Activated CD4-positive, alpha-beta T cell treated with anti-CD3 and anti-CD28 coated beads for 36 hours (primary cell): ENCODE measurements at regions of chr7 and their contacts with region 1.

Region 1: DNA sequence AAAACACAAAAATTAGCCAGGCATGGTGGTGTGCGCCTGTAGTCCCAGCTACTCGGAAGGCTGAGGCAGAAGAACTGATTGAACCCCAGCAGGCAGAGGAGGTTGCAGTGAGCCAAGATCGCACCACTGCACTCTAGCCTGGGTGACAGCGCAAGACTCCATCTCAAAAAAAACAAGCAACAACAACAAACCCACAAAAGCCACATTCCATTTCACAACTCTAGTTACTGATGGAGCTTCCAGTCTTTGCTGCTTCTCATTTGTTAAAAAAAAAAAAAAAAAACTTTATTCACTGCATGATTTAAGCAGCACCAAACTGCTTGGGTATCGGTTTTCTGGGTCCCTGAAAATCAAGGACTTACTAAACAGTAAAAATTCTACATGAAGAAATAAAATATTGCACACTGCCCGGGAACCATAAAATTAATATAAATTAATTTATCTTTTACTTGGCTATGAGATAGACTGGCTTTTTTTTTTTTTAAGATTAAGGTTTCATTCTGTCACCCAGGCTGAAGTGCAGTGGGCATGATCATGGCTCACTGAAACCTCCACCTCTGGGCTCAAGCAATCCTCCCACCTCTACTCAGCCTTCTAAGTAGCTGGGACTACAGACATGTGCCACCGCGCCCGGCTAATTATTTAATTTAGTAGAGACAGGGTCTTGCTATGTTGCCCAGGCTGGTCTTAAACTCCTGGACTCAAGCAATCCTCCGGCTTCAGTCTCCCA is 42.0 kb downstream of the SRPK2 start:
- DNase-seq: peak; percentile 29
- ATAC-seq: peak; percentile 25
- H3K4me3 Mint-ChIP-seq: peak overlapping the region; percentile 10
- H3K27ac Mint-ChIP-seq: no peak overlapping the region
- H3K4me1 Mint-ChIP-seq: peaks cover 67% of the 10 kb centered on the region
- H3K27me3 Mint-ChIP-seq: no peaks in the 10 kb centered on the region

Region 2: GRCh38 chr7:105261688-105262087 is 85.1 kb before region 1 on chr7:
- CTCF ChIA-PET with region 1: no interaction called
- POLR2A ChIA-PET with region 1: no interaction called
- intact Hi-C with region 1: no loop called
- DNase-seq: no peak
- ATAC-seq: no peak
- H3K4me3 Mint-ChIP-seq: no peak overlapping the region
- H3K27ac Mint-ChIP-seq: no peak overlapping the region
- H3K4me1 Mint-ChIP-seq: peaks cover 50% of the 10 kb centered on the region
- H3K27me3 Mint-ChIP-seq: no peaks in the 10 kb centered on the region

Region 3: DNA sequence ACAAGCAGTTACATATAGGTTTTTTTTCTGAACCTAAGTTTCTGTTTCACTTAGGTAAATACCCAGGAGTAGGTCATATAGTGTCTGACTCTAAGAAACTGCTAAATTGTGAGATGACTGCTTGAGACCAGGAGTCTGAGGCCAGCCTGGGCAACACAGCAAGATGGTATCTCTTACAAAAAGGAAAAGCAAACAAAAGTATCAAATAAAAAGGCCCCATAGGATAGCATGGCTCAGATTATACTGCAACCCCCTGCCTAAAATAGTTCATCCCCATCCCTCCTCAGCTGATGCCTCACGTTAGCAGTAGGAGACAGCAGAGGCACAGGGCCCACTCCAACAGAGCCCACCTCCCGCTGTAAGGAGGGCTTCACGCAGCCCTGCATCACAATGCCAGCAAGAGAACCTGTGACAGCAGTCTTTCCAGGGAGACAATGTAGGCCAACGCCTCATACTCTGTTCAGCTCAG is 48.3 kb before region 1 on chr7:
- CTCF ChIA-PET with region 1: no interaction called
- POLR2A ChIA-PET with region 1: no interaction called
- intact Hi-C with region 1: loop called in 1 of 2 experiments (anchors 2 kb)
- DNase-seq: peak; percentile 65
- ATAC-seq: peak; percentile 92
- H3K4me3 Mint-ChIP-seq: peak overlapping the region; percentile 53
- H3K27ac Mint-ChIP-seq: peak overlapping the region; percentile 90
- H3K4me1 Mint-ChIP-seq: peaks cover 58% of the 10 kb centered on the region
- H3K27me3 Mint-ChIP-seq: no peaks in the 10 kb centered on the region

Region 4: DNA sequence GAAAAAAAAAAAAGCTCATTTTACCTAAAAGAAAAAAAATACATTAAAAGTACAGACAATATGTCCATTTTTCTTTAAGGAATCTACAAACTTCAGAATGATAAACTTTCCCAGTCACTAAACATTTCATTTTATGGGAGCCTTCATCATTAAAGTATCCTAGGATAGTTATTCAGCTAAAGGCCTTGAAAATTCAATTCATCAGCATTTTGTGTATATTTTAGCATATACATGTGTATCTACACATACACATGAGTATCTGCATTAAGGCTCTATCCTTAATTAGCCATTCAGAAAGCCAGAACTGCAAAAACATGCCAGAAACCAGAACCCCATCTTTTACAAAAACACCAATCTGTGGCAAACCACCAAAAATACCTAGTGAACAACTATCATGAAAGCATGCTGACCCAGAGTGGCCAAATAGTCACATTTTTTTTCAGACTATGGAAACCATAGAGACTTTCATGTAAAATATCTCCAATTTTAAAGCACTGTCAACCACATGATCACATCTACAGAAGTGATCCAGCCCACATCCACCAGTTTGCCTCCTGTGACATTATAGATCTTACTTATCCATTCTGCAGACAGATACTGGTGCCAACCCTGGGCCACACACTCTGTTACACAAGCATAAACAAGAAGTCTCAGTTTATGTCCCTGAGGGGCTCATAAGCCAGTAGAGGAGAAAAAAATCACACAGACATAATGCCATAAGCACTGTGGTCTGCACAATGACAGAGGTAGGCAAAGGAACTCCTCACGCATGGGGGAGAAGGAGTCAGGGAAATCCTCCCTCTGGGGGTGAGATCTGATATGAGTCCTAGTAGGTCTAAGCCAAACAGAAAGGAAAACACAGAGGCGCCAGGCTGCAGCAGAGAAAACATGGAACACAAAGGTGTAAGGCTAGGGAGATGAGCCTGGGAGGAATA is 37.3 kb before region 1 on chr7:
- CTCF ChIA-PET with region 1: no interaction called
- POLR2A ChIA-PET with region 1: no interaction called
- intact Hi-C with region 1: loop called in 1 of 2 experiments (anchors 5 kb)
- DNase-seq: peak; percentile 16
- ATAC-seq: peak; percentile 39
- H3K4me3 Mint-ChIP-seq: no peak overlapping the region
- H3K27ac Mint-ChIP-seq: peak overlapping the region; percentile 30
- H3K4me1 Mint-ChIP-seq: peaks cover 56% of the 10 kb centered on the region
- H3K27me3 Mint-ChIP-seq: no peaks in the 10 kb centered on the region

Region 5: GRCh38 chr7:105602325-105603305 is 255.9 kb after region 1 on chr7:
- CTCF ChIA-PET with region 1: no interaction called
- POLR2A ChIA-PET with region 1: no interaction called
- intact Hi-C with region 1: no loop called
- DNase-seq: no peak
- ATAC-seq: no peak
- H3K4me3 Mint-ChIP-seq: no peak overlapping the region
- H3K27ac Mint-ChIP-seq: no peak overlapping the region
- H3K4me1 Mint-ChIP-seq: no peaks in the 10 kb centered on the region
- H3K27me3 Mint-ChIP-seq: no peaks in the 10 kb centered on the region